GM12878 (cell line): ENCODE measurements at regions of chr20 and their contacts with region 1.

Region 1: DNA sequence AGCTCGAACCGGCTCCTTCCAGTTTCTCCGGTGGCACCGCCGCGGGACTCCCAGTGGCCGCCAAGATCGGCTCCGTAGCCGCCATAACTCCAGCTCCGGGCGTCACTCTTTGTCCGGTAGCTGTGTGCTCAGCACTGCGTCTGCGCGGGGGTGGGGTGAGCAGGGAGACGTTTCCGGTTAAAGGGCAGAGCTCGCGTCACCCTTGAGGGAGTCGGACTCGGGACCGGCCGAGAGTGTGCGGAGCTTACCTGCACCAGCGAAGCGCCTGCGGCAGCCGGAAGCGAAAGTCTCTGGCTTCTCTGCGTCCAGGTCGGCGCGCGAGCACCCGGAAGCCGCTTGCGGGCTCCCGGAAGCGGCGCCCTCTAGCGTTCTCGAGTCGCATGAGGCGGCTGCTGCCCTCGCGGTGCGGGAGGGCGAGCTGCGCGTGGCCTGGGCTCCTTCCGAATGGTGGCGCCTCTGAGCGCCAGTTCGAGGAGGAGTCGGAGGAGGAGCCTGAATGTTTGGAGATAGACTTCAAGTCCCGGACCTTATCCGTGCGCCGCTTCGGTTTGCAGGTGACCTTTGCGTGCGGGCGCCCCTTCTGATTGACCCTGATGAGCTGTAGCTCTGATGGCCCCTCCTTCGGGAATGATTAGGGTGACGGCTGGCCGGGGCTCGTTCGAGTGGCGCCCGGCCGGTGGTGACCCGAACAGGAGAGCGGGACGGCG is at the start of gene SCAND1:
- DNase-seq: peak; percentile 93
- ATAC-seq: peak; percentile 92
- H3K4me3 ChIP-seq: peak within 1 kb of the TSS; percentile 91
- H3K27ac ChIP-seq: peak within 1 kb of the TSS; percentile 96
- H3K4me1 ChIP-seq: peaks cover 3% of the 10 kb centered on the region
- H3K27me3 ChIP-seq: no peaks in the 10 kb centered on the region
- CTCF ChIP-seq: peak; percentile 93 to 99 (median 99)
- EP300 ChIP-seq: peak in 1 of 2 experiments; percentile 52; a peak in 1 of 4 replicates
- POLR2A ChIP-seq: peak; percentile 95
- RAD21 ChIP-seq: peak; percentile 20; the same call in 1 of the 2 replicates
- polyA plus RNA-seq, gene SCAND1: 0.08 to 0.16 TPM

Region 2: GRCh38 chr20:35771689-35772562 is 182.4 kb before region 1 on chr20 and contains the start of gene PHF20:
- CTCF ChIA-PET with region 1: interaction called, 3 read pairs
- POLR2A ChIA-PET with region 1: interaction called, 13 read pairs
- RAD21 ChIA-PET with region 1: interaction called, 6 read pairs
- SMC1A ChIA-PET with region 1: interaction called, 4 read pairs
- in situ Hi-C with region 1: no loop called
- intact Hi-C with region 1: no loop called
- DNase-seq: peak; percentile 87
- ATAC-seq: peak; percentile 88
- H3K4me3 ChIP-seq: peak within 1 kb of the TSS; percentile 92
- H3K27ac ChIP-seq: peak within 1 kb of the TSS; percentile 79
- H3K4me1 ChIP-seq: peaks cover 33% of the 10 kb centered on the region
- H3K27me3 ChIP-seq: no peaks in the 10 kb centered on the region
- CTCF ChIP-seq: no peak
- EP300 ChIP-seq: peak; percentile 16 to 24; a peak in 1 of 4 replicates
- POLR2A ChIP-seq: peak; percentile 90
- RAD21 ChIP-seq: no peak
- polyA plus RNA-seq, gene PHF20: 90.7 to 91.2 TPM

Region 3: DNA sequence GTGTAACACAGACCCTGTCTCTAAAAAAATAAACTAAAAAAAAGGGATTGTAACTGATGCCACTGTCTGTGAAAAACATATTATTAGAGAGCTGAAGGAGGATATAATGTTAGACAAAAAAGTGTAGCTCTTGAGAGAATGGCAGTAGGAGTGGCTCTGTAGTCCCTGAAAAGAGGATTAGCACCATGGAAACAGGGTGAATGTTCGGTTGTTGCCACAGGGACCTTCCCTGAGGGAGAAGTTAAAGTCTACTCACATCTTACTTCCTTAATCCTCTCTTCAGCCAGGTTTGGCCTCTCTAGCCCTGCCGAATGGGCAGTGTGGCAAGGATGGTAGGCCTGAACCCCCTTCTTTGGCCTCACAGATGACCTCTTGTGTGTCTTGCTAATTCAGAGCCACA is 12.1 kb before region 1 on chr20:
- CTCF ChIA-PET with region 1: interaction called, 16 read pairs
- POLR2A ChIA-PET with region 1: no interaction called
- RAD21 ChIA-PET with region 1: no interaction called
- SMC1A ChIA-PET with region 1: interaction called, 12 read pairs
- in situ Hi-C with region 1: no loop called
- intact Hi-C with region 1: no loop called
- DNase-seq: no peak
- ATAC-seq: no peak
- H3K4me3 ChIP-seq: no peak overlapping the region
- H3K27ac ChIP-seq: no peak overlapping the region
- H3K4me1 ChIP-seq: no peaks in the 10 kb centered on the region
- H3K27me3 ChIP-seq: no peaks in the 10 kb centered on the region
- CTCF ChIP-seq: no peak
- EP300 ChIP-seq: no peak
- POLR2A ChIP-seq: no peak
- RAD21 ChIP-seq: no peak

Region 4: DNA sequence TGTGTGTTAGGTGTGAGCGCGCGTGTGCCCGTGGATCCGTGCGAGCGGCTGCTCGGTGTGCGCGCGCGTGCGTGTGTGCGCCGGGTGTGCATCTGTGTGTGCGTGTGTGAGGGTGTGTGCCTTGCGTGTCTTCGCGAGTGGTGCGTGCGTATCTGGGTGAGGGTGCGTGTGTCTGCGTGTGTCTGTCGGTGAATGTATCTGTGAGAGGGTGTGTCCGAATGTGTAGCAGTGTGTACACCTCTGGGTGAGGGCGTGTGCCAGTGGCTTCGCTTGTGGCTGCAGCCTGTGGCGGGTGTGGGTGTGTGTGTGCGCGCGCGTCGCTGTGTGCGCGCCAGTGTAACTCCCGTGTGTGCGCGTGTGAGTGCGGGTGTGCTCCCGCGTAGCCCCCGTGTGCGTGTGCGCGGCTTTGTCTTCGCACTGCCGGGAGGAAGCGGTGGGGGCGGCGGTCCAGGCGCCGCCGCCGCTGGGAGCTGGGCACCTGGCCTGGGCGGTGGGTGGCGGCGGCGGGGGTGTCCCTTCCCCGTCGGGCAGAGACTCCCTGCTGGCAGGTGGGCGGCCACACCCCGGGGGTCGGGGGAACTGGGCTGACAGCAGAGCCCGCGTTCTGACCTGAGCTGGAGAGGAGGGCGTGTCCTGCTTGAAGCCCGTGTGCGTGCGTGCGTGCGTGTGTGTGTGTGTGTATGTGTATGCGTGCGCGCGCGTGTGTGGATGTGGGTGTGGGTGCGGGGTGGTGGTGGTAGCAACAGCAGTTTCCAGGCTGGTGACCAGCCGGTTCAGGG is 138.9 kb after region 1 on chr20:
- CTCF ChIA-PET with region 1: no interaction called
- POLR2A ChIA-PET with region 1: no interaction called
- RAD21 ChIA-PET with region 1: no interaction called
- SMC1A ChIA-PET with region 1: no interaction called
- in situ Hi-C with region 1: no loop called
- intact Hi-C with region 1: no loop called
- DNase-seq: no peak
- ATAC-seq: peak; percentile 54
- H3K4me3 ChIP-seq: peak overlapping the region; percentile 69
- H3K27ac ChIP-seq: no peak overlapping the region
- H3K4me1 ChIP-seq: peaks cover 19% of the 10 kb centered on the region
- H3K27me3 ChIP-seq: peaks cover 10 to 27% of the 10 kb centered on the region in 2 experiments
- CTCF ChIP-seq: no peak
- EP300 ChIP-seq: no peak
- POLR2A ChIP-seq: no peak
- RAD21 ChIP-seq: no peak

Region 5: DNA sequence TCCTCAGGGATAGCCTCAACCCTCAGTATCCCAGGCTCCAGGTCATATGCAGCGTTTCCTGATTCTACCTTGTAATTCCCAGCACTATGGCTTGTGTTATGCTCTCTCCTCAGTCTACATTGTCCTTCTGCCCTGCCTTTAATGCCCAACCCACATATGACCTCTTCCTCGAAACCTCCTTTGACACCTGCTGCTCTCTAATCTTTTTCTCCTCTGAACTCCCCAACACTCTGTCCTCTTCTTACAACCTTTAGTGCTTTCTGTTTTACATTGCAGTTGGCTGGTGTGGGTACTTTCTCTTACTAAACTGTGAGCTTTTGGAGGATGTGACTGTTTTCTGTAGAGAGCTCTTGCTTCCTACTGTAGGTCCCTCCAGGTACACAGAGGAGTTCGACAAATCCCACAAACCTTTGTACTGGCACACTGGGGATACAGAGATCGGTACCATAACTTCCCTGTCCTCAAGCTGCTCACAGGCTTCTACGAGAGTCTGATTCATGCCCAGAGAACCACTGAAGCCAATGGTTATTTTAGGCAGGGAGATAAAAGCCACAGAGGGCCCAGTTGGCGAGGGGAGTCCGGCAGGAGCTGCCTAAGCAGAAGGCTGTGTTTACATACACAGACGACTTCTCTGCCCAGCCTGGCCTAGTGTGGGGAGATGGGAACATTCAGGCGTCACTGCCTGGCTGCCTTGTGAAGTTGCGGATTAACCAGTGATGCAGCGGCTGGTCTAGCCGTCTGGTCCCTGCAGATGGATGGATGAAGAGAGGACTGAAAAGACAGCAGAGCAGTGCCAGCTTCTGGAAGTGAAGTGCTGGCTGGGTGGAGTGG is 191.7 kb after region 1 on chr20:
- CTCF ChIA-PET with region 1: interaction called, 10 read pairs
- POLR2A ChIA-PET with region 1: interaction called, 5 read pairs
- RAD21 ChIA-PET with region 1: interaction called, 3 read pairs
- SMC1A ChIA-PET with region 1: no interaction called
- in situ Hi-C with region 1: no loop called
- intact Hi-C with region 1: no loop called
- DNase-seq: no peak
- ATAC-seq: peak; percentile 24
- H3K4me3 ChIP-seq: no peak overlapping the region
- H3K27ac ChIP-seq: no peak overlapping the region
- H3K4me1 ChIP-seq: peaks cover 19% of the 10 kb centered on the region
- H3K27me3 ChIP-seq: no peaks in the 10 kb centered on the region
- CTCF ChIP-seq: no peak
- EP300 ChIP-seq: no peak
- POLR2A ChIP-seq: no peak
- RAD21 ChIP-seq: no peak